ENCODE measurements at regions of chr6 and their contacts with region 1.

Region 1: GRCh38 chr6:15441215-15441868 is 195.5 kb downstream of the JARID2 start:
- DNase-seq: peak; percentile 25 to 33
- ATAC-seq: peak; percentile 44 to 55
- H3K4me3 ChIP-seq: no peak overlapping the region
- H3K27ac ChIP-seq: peak overlapping the region; percentile 9 to 64 (median 32)
- H3K4me1 ChIP-seq: peaks cover 60 to 69% of the 10 kb centered on the region in 2 donors
- H3K27me3 ChIP-seq: no peaks in the 10 kb centered on the region
- CTCF ChIP-seq: peak; percentile 60 to 85 (median 80)
- POLR2A ChIP-seq: no peak

Region 2: GRCh38 chr6:14371530-14371929 is 1069.8 kb before region 1 on chr6:
- in situ Hi-C with region 1: no loop called
- intact Hi-C with region 1: no loop called
- DNase-seq: no peak
- ATAC-seq: no peak
- H3K4me3 ChIP-seq: no peak overlapping the region
- H3K27ac ChIP-seq: no peak overlapping the region
- H3K4me1 ChIP-seq: peaks cover 6 to 11% of the 10 kb centered on the region in 2 donors
- H3K27me3 ChIP-seq: no peaks in the 10 kb centered on the region
- CTCF ChIP-seq: no peak
- POLR2A ChIP-seq: no peak

Region 3: DNA sequence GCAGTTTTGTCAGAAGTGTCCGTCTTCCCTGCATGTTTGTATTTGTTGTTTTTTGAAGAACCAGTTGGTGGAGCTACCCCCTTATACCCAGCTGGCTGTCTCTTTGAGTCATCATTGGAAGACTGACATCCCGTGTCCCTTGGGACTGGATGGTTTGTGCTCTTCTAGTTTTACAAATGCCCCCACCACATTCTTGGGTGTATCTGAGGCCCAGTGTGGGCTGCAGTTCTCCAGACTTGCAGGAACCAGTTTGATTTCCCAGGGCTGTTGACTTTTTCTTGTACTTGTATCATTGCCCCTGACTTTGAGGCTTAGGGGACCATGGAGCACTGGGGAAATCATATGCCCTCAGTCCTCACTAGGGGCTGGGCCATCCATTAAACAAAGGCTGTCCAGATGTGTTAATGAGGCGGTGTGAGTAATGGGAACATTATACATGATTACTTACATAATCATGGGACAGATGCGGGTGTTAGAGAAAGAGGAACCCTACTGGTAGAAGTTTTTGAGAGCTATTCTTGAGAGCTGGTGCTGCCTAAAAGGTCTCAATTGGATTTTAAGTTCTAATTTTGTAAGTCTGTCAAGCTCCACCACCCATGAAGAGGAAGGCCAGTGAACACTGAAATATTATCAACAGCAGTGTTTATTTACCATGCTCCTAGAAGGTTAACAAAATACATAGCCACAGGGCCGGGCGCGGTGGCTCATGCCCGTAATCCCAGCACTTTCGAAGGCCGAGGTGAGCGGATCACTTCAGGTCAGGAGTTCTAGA is 187.1 kb before region 1 on chr6:
- in situ Hi-C with region 1: loop called in 1 of 4 experiments (anchors 25 kb)
- intact Hi-C with region 1: no loop called
- DNase-seq: peak in 1 of 2 donors; percentile 42
- ATAC-seq: peak; percentile 51 to 55
- H3K4me3 ChIP-seq: no peak overlapping the region
- H3K27ac ChIP-seq: peak overlapping the region; percentile 89 to 98 (median 95)
- H3K4me1 ChIP-seq: peaks cover 89 to 93% of the 10 kb centered on the region in 2 donors
- H3K27me3 ChIP-seq: no peaks in the 10 kb centered on the region
- CTCF ChIP-seq: peak in 1 of 5 experiments; percentile 22
- POLR2A ChIP-seq: no peak

Region 4: DNA sequence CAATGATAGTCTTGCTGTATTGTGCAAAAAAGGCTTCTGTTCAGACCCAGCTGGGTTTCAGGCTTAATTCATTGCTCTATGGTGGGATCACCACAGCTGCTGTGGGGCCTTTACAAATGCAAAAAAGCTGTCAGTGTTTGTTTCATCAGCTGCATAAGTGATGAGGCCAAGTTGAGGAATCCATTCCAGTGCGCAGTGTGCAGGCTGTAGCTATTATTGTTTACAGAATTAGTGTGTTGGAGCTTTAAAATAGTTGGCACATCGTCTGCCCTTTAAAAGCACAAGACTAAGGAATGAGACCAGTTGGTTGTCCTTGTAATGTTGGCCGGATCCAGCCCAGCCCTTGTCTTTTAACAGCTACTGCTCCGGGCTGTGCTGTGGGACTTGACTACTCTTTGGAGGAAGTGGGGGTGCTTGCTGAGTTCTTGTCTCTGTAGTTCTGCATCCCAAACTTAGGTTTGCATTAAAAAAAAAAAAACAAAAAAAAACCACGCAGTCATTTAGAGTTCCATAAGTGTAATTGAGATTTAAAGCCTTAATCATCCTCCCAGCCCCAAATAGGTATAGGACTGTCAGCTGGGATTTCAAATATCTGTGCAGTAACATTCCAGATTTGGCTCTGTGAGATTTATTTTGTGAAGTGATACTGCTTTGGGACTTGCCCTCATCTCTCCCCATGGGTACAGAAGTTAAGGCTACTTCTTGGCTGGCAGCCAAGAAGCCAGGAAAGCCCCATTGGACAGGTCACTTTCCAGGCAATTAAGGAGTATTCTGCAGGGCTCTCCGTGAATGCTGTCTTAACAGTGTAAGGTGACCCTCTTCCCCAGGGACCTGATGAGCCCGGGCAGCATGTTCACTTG is 176.2 kb before region 1 on chr6:
- in situ Hi-C with region 1: loop called in 1 of 4 experiments (anchors 25 kb)
- intact Hi-C with region 1: loop called (anchors 5 kb)
- DNase-seq: peak; percentile 58 to 63
- ATAC-seq: peak; percentile 48 to 51
- H3K4me3 ChIP-seq: peak overlapping the region in 3 of 4 donors; percentile 0 to 39 (median 10)
- H3K27ac ChIP-seq: peak overlapping the region; percentile 82 to 88 (median 84)
- H3K4me1 ChIP-seq: peaks cover 78 to 87% of the 10 kb centered on the region in 2 donors
- H3K27me3 ChIP-seq: no peaks in the 10 kb centered on the region
- CTCF ChIP-seq: no peak
- POLR2A ChIP-seq: no peak

Region 5: GRCh38 chr6:15429141-15430110 is 11.9 kb before region 1 on chr6:
- in situ Hi-C with region 1: no loop called
- intact Hi-C with region 1: loop called (anchors 1 kb)
- DNase-seq: no peak
- ATAC-seq: peak in 1 of 2 donors; percentile 11
- H3K4me3 ChIP-seq: no peak overlapping the region
- H3K27ac ChIP-seq: peak overlapping the region; percentile 83 to 90 (median 90)
- H3K4me1 ChIP-seq: peaks cover 69 to 77% of the 10 kb centered on the region in 2 donors
- H3K27me3 ChIP-seq: no peaks in the 10 kb centered on the region
- CTCF ChIP-seq: no peak
- POLR2A ChIP-seq: no peak

Region 6: DNA sequence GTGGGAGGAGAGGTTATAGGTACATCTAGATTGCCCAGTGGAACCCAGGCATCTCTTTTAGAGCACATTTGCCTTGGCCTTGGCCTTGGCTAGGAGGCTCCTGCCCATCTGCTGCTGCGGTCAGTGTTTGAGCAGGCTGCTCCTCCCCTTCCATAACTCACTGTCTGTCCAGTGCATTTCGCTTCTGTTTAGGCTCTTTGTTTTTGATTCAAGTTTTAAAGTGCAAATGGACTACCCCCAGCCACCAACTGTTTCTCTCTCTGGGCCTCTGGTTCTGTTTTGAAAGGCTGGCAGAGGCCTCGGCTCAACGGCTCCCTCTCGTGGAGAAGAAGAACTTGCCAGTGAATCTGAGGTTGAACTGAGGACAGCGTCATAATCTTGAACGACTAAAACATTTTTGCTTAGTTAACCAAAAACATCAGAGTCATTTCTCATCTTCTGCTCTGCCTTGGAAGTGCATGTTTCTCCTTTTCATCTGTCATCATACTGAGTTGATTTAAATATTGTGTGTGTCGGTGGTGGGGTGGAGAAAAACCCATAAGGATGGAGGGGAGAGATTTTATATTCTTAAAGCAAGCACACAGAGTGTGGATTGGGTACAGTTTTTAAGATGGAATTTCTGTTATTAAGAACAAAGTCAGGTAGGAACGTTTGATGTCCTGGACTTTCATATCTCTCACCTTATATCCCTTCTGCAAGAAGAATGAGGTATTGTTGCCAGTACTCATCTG is 50.1 kb after region 1 on chr6:
- in situ Hi-C with region 1: no loop called
- intact Hi-C with region 1: loop called (anchors 2 kb)
- DNase-seq: peak; percentile 59 to 77
- ATAC-seq: peak; percentile 42 to 56
- H3K4me3 ChIP-seq: no peak overlapping the region
- H3K27ac ChIP-seq: peak overlapping the region; percentile 55 to 73 (median 69)
- H3K4me1 ChIP-seq: peaks cover 38 to 45% of the 10 kb centered on the region in 2 donors
- H3K27me3 ChIP-seq: no peaks in the 10 kb centered on the region
- CTCF ChIP-seq: peak; percentile 86 to 94 (median 93)
- POLR2A ChIP-seq: no peak